ENCODE measurements at regions of chr19 and their contacts with region 1.

Region 1: GRCh38 chr19:51926784-51927742 is at the start of gene ZNF613:
- DNase-seq: peak; percentile 93
- ATAC-seq: peak; percentile 97
- total RNA-seq, gene ZNF613: 3.7 TPM

Region 2: DNA sequence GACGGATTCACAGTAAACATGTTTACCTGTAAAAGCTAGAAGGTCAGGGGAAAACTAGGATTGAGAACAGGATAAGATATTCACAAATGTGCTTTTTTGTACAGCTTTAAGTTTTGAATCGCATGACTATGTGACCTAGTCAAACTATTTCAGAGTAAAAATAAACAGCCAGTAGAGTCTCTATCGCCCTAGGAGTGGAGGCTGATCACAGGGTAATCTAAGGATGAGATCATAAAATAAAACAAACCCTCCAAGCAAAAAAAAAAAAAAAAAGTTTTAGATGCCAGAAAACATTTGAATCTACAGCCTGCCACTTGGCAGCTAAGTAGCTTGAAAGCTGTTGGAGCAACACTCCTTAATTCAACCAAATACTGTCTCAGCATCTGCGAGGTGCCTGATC is 32.7 kb after region 1 on chr19:
- intact Hi-C with region 1: no loop called
- DNase-seq: no peak
- ATAC-seq: no peak

Region 3: GRCh38 chr19:51986309-51987291 is 59.5 kb after region 1 on chr19 and contains the start of gene ZNF350:
- intact Hi-C with region 1: loop called (anchors 2 kb)
- DNase-seq: peak; percentile 96
- ATAC-seq: peak; percentile 100
- total RNA-seq, gene ZNF350: 7.3 TPM

Measured in Right ventricle myocardium inferior (tissue), 1 donor.